Activated CD8-positive, alpha-beta T cell treated with anti-CD3 and anti-CD28 coated beads, Interleukin-2, amount 10 ng/mL, durations not matched to agents 7 days and 5 days (primary cell): ENCODE measurements at regions of chr21 and their contacts with region 1.

Region 1: GRCh38 chr21:44927587-44928461 is 7.1 kb upstream of the ITGB2 start:
- DNase-seq: peak; percentile 92
- ATAC-seq: peak; percentile 54
- H3K4me3 Mint-ChIP-seq: peak overlapping the region; percentile 84
- H3K27ac Mint-ChIP-seq: peak overlapping the region; percentile 94
- H3K4me1 Mint-ChIP-seq: peaks cover 82% of the 10 kb centered on the region
- H3K27me3 Mint-ChIP-seq: no peaks in the 10 kb centered on the region

Region 2: GRCh38 chr21:44873356-44874239 is 54.2 kb before region 1 on chr21 and contains the start of gene PTTG1IP:
- CTCF ChIA-PET with region 1: interaction called, 5 read pairs
- POLR2A ChIA-PET with region 1: interaction called, 13 read pairs
- DNase-seq: peak; percentile 99
- ATAC-seq: peak; percentile 83
- H3K4me3 Mint-ChIP-seq: peak within 1 kb of the TSS; percentile 92
- H3K27ac Mint-ChIP-seq: peak within 1 kb of the TSS; percentile 90
- H3K4me1 Mint-ChIP-seq: peaks cover 60% of the 10 kb centered on the region
- H3K27me3 Mint-ChIP-seq: no peaks in the 10 kb centered on the region
- total RNA-seq, gene PTTG1IP: 54.9 to 55.2 TPM

Region 3: GRCh38 chr21:44892536-44893277 is 35.1 kb before region 1 on chr21:
- CTCF ChIA-PET with region 1: interaction called, 43 read pairs
- POLR2A ChIA-PET with region 1: interaction called, 9 read pairs
- DNase-seq: peak; percentile 86
- ATAC-seq: peak; percentile 86
- H3K4me3 Mint-ChIP-seq: no peak overlapping the region
- H3K27ac Mint-ChIP-seq: peak overlapping the region; percentile 71
- H3K4me1 Mint-ChIP-seq: peaks cover 11% of the 10 kb centered on the region
- H3K27me3 Mint-ChIP-seq: no peaks in the 10 kb centered on the region

Region 4: DNA sequence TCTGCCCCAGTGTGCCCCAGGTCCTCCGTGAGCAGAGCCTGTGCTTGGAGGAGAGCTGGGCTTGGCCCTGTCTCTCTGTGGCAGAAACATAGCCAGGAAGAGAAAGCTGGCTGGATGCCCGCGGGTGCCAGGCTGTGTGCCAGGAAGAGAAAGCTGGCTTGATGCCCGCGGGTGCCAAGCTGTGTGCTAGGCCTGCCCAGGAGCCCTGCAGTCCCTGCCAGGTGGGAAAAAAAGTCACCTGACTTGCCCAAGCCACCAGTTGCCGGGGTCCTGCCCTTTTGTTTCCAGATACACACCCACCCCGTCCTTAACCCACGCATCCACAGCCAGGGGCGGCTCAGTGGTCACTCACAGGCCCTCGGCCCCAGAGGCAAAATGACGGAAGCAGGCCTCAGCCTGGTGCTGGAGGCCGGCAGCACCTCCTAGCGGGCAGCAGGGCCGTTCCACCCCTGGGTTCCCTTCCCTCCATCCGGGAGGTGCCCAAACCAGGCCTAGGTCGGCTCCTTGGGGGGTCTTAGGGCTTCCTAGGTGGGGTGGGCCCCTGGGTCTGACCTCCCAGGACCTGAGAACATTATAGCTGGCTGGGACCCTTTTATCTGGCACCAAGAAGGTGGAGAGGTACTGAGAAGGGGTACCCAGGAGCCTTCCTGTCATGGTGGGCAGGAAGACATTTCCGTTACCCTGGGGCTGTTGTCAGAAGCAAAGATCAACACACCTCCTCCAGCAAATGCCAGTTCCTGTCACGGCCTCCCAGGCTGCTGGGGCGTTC is 16.3 kb before region 1 on chr21:
- CTCF ChIA-PET with region 1: interaction called, 74 read pairs
- POLR2A ChIA-PET with region 1: interaction called, 57 read pairs
- DNase-seq: peak; percentile 79
- ATAC-seq: peak; percentile 66
- H3K4me3 Mint-ChIP-seq: peak overlapping the region; percentile 73
- H3K27ac Mint-ChIP-seq: peak overlapping the region; percentile 80
- H3K4me1 Mint-ChIP-seq: peaks cover 80% of the 10 kb centered on the region
- H3K27me3 Mint-ChIP-seq: no peaks in the 10 kb centered on the region

Region 5: DNA sequence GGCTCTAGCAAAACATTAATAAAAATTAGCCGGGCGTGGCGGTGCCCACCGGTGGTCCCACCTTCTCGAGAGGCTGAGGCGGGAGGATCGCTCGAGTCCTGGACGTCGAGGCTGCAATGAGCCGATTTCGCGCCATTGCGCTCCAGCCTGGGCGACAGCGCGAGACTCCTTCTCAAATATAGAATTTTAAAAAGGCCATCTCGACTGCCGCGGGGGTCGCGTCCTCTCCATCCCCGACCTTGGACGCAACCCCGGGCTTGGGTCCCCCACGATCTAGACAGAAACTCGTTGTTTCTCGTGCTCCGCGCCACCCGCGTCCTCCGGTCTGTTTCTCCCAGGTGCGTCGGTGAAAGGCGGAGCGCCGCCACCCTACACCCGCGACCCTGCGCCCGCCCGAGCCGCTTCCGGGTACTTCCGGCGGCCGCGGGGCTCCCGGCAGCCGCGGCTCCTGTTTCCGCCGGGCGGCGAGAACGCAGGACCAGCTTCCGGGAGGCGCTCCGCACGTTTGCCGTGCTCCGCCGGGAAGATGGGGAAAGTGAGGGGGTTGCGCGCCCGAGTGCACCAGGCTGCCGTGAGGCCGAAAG is 11.8 kb after region 1 on chr21 and contains the start of gene SLX9:
- CTCF ChIA-PET with region 1: interaction called, 6 read pairs
- POLR2A ChIA-PET with region 1: interaction called, 12 read pairs
- DNase-seq: peak; percentile 81
- ATAC-seq: peak; percentile 92
- H3K4me3 Mint-ChIP-seq: peak within 1 kb of the TSS; percentile 86
- H3K27ac Mint-ChIP-seq: peak within 1 kb of the TSS; percentile 84
- H3K4me1 Mint-ChIP-seq: peaks cover 52% of the 10 kb centered on the region
- H3K27me3 Mint-ChIP-seq: no peaks in the 10 kb centered on the region
- total RNA-seq, gene SLX9: 56.6 to 60.4 TPM

Region 6: GRCh38 chr21:45120975-45121374 is 193.2 kb after region 1 on chr21:
- CTCF ChIA-PET with region 1: no interaction called
- POLR2A ChIA-PET with region 1: no interaction called
- DNase-seq: no peak
- ATAC-seq: no peak
- H3K4me3 Mint-ChIP-seq: no peak overlapping the region
- H3K27ac Mint-ChIP-seq: no peak overlapping the region
- H3K4me1 Mint-ChIP-seq: peaks cover 23% of the 10 kb centered on the region
- H3K27me3 Mint-ChIP-seq: no peaks in the 10 kb centered on the region